PC-3 (cell line): ENCODE measurements at regions of chr2 and their contacts with region 1.

Region 1: DNA sequence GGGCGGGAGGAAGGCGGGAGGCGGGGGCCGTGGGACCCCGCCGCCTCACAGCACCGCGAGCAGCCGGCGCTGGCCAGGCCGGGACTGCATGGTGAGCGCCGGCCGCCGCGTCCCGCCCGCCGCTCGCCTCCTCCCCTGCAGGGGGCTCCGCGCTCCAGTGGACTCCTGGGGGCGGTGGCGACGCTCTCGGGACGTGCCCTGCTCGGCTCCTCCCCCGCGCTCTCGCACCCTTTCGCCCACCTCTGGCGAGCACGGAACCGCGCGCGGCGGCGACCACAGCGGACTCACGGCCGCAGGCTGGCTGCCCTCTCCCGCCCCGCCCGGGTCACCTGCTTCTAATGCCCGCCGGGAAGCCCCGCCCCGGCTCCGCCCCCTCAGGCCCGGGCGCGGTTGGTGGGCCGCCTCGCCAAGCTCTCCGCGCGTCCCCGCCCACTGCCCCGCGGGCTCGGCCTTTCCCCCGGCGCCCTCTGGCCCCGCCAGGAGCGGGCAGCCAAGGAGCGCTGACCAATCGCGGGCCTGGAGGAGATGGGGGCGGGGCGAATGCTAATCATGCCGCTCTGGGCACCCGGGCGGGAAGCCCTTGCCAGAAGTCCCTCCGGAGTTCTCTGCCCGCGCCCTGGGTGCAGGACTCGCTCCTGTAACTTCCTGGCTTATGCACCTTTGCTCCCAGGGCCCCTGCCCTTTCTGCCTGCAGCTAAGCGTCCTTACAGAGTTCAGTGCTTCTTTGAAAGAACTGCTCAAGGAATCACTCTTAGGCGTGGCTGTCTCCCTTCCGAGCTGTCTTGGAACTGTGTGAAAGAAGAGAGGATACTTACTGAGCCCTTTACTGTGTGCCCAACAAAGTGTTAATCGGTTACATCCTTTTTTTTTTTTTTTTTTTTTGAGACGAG is at the start of gene FZD5:
- DNase-seq: peak; percentile 98
- ATAC-seq: peak; percentile 76
- H3K4me3 ChIP-seq: peak within 1 kb of the TSS; percentile 94
- H3K27ac ChIP-seq: peak within 1 kb of the TSS; percentile 35
- H3K4me1 ChIP-seq: peaks cover 14% of the 10 kb centered on the region; the same call in 1 of the 2 replicates
- H3K27me3 ChIP-seq: no peaks in the 10 kb centered on the region
- CTCF ChIP-seq: peak; percentile 35; the same call in 1 of the 2 replicates
- total RNA-seq, gene FZD5: 7.2 and 7.5 TPM in 2 replicates

Region 2: GRCh38 chr2:207394812-207395534 is 374.9 kb before region 1 on chr2:
- CTCF ChIA-PET with region 1: interaction called, 10 read pairs
- POLR2A ChIA-PET with region 1: no interaction called
- intact Hi-C with region 1: no loop called
- DNase-seq: peak; percentile 99
- ATAC-seq: peak; percentile 86
- H3K4me3 ChIP-seq: peak overlapping the region; percentile 40
- H3K27ac ChIP-seq: peak overlapping the region; percentile 99
- H3K4me1 ChIP-seq: peaks cover 23% of the 10 kb centered on the region
- H3K27me3 ChIP-seq: no peaks in the 10 kb centered on the region
- CTCF ChIP-seq: no peak

Region 3: DNA sequence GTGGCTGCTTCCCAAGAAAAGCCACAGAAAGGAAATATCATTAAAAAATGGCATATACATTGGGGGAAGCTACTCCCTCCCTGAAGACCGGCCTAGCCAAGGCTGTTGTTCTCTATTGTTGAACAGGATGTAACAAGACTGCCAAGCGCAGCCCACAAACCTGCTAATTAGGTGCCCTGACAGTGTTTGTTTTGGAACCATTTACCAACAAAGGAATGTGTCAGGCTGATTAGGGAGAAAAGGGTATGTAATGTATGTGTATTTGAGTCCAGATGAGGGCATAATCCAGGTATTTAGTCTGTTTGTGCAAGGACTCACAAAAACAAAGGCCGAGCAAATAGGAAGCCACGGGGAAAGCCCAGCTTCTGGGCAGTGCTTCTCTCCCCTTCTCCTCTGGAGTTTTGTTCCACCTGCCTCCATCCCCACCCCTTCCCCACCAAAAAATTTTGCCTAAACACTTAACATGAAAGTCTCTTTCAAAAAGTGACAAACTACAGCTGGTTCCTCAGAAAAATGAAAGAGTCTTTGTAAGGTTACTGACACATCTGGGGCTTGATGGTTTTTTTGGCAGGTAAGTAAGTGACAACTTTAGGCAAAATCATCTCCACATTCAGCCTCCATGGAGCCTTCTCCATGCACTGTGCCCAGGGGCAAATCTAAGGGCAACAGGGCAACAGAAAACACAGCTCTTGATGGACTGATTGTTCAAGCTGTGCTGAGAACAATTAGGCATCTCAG is 78.1 kb after region 1 on chr2:
- CTCF ChIA-PET with region 1: no interaction called
- POLR2A ChIA-PET with region 1: no interaction called
- intact Hi-C with region 1: loop called (anchors 1 kb)
- DNase-seq: peak; percentile 84
- ATAC-seq: peak; percentile 93
- H3K4me3 ChIP-seq: no peak overlapping the region
- H3K27ac ChIP-seq: no peak overlapping the region
- H3K4me1 ChIP-seq: peaks cover 16% of the 10 kb centered on the region
- H3K27me3 ChIP-seq: no peaks in the 10 kb centered on the region
- CTCF ChIP-seq: no peak

Region 4: DNA sequence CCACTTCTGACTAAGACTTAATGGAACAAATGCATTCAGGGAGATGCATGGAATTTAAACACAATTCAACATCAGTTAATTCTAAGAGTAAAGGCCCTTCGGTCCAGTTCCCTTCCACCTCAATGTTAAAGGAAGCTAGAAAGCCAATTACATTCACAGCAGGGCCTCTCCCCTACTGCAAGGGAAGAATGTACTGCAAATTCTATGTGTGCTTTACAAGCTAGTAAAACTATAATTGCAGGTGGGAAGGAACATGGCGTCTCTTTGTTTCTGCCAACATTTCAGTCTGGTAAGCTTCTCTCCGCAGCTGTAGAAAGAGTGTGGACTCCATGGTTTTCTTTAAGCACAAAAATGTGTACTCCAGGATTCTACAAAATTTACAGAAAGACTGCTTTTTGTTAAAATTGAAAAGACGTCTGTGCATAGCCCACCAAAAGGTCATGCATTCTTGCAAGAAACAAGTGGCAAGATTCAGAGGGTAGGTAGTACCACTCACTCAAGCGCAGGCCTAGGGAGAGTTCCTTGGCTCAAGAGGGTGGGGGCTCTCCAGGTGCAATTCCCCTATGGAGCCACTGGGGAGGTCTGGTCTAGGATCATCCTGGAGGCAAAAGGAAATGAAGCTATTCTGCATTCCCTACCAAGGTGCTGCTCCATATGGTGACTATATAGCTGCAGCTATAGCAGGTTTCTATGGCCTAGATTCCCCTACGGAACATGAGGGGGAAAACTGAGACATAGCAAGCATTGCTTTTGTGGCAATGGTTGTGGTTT is 126.9 kb after region 1 on chr2:
- CTCF ChIA-PET with region 1: no interaction called
- POLR2A ChIA-PET with region 1: no interaction called
- intact Hi-C with region 1: no loop called
- DNase-seq: peak; percentile 18
- ATAC-seq: peak; percentile 78
- H3K4me3 ChIP-seq: no peak overlapping the region
- H3K27ac ChIP-seq: no peak overlapping the region
- H3K4me1 ChIP-seq: no peaks in the 10 kb centered on the region
- H3K27me3 ChIP-seq: no peaks in the 10 kb centered on the region
- CTCF ChIP-seq: peak; percentile 39; the same call in 1 of the 2 replicates

Region 5: GRCh38 chr2:208025037-208025813 is 255.4 kb after region 1 on chr2 and contains the start of gene PLEKHM3:
- CTCF ChIA-PET with region 1: no interaction called
- POLR2A ChIA-PET with region 1: no interaction called
- intact Hi-C with region 1: loop called (anchors 2 kb)
- DNase-seq: peak; percentile 84
- ATAC-seq: peak; percentile 97
- H3K4me3 ChIP-seq: peak within 1 kb of the TSS; percentile 91
- H3K27ac ChIP-seq: no peak within 1 kb of the TSS
- H3K4me1 ChIP-seq: peaks cover 5% of the 10 kb centered on the region
- H3K27me3 ChIP-seq: no peaks in the 10 kb centered on the region
- CTCF ChIP-seq: no peak
- total RNA-seq, gene PLEKHM3: 5.9 and 7.9 TPM in 2 replicates

Region 6: DNA sequence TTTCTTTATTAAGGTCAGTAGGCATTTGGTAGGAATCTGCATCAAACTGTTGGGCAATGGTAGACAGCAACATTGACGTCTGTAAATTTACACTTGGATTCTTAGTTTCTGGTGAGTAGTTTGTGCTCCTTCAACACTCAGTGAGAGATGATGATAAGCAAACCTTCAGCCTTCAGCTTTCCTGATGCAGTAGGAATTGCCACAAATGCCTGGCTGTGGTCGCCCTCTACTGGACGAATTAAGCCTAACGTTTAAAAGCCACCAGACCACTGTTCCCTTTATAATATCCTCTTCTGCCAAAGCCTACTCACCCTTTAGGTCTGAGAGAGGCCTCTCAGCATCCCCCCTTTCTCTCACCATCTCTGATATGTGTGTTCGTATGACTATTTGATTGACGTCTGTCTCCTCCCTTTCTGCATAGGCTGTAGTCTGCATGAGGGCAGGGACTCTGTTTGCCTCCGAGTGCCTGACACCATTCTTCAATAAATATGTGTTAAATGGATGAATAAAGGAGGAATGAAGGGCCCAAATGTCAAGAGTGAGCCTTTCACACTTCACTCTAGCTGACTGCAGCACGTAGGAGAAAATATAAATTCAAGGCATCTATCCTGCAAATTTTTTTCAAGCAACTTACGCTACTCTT is 302.5 kb after region 1 on chr2:
- CTCF ChIA-PET with region 1: no interaction called
- POLR2A ChIA-PET with region 1: no interaction called
- intact Hi-C with region 1: loop called (anchors 1 kb)
- DNase-seq: peak; percentile 77
- ATAC-seq: peak; percentile 85
- H3K4me3 ChIP-seq: no peak overlapping the region
- H3K27ac ChIP-seq: no peak overlapping the region
- H3K4me1 ChIP-seq: no peaks in the 10 kb centered on the region
- H3K27me3 ChIP-seq: peaks cover 16% of the 10 kb centered on the region; the same call in 1 of the 2 replicates
- CTCF ChIP-seq: peak; percentile 88